Esophagus muscularis mucosa (tissue), 4 donors: ENCODE measurements at regions of chr20 and their contacts with region 1.

Region 1: GRCh38 chr20:33299111-33299603 is 16.1 kb downstream of the BPIFB1 start:
- DNase-seq: no peak
- H3K4me3 ChIP-seq: no peak overlapping the region
- H3K27ac ChIP-seq: no peak overlapping the region
- H3K4me1 ChIP-seq: peaks cover 0 to 6% (median 5%) of the 10 kb centered on the region in 4 donors
- H3K27me3 ChIP-seq: peaks cover 0 to 26% (median 0%) of the 10 kb centered on the region in 4 donors
- CTCF ChIP-seq: peak; percentile 71 to 93 (median 87)
- EP300 ChIP-seq: no peak
- POLR2A ChIP-seq: no peak

Region 2: DNA sequence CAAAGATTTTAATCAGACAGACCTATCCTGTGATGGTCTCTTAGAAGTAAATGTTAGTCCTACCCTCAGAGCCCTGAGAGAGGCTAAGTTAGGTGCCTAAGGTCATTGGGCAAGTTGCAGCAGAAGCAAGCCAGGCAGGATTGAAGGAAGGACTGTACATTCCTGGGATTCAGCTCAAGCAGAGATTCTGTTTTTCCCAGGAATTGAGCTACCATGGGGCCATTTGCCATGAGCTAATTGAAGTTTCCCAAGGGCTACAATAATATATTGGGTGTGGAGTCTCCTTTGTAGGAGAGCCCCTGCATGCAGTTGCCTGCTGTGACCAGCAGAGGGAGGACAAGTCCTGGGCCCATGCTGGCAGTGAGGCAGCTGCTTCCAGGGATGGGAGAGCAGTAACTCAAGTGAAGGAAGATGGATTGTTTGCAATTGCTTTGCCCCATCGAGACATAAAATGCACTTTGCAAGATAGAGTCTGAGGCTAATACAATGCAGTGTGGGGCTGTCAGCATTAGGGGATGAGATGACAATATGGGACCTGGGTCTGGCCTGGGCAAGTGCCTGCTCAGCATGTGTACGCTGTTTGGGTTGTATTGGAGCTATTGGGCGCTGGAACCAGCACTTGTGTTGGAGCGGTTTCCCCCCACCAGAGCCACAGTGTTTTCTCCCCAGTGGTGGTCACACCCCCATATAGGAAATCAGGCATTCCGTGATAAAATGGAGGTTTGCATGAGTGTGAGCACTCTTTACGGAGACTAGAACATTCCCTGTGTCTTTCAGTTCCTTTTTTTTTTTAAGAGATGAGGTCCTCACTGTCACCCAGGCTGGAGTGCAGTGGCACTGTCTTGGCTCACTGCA is 509.0 kb before region 1 on chr20:
- intact Hi-C with region 1: loop called (anchors 5 kb)
- DNase-seq: no peak
- H3K4me3 ChIP-seq: no peak overlapping the region
- H3K27ac ChIP-seq: no peak overlapping the region
- H3K4me1 ChIP-seq: peaks cover 0 to 11% (median 3%) of the 10 kb centered on the region in 4 donors
- H3K27me3 ChIP-seq: no peaks in the 10 kb centered on the region
- CTCF ChIP-seq: peak in 2 of 3 experiments; percentile 97 to 99
- EP300 ChIP-seq: no peak
- POLR2A ChIP-seq: no peak

Region 3: DNA sequence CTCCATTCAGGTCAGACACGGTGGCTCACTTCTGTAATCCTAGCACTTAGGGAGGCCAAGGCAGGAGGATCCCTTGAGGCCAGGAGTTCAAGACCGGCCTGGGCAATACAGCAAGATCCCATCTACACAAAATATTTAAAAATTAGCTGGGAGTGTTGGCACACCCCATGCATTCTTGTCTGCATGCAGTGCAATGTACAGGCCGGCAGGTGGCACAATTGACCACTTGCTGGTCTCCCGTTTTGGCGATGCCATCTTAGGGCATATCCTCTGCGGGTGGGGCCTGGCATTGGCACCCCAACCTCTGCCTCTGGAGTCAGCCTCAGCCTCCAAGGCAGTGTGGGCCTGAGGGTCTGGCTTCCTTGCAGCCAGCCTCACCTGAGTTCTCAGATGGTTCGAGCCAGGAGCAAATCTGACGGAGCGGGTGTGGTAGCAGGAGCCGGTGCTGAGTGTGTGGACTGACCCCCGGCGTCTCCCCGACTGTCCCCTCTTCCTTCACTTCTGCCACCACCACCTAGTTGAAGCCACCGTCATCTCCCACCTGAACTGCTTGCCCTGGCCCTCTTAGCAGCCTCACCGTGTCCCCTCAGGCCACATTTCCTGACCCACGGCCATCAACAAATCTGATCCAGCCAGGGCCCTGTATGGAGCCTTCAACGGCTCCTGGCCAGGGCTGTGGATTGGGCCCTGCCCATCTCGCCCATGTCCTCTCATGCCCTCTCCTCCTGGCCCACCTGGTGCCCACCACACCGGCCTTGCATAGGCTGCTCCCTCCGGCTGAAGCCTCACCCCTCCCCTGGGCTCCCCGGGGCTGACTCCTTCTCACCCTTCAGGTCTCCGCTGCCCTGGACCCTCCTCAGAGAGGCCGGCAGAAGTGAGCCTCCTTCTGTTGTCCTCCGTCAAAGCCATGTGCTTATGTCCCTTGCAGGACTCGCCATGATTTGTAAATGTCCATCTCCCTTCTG is 396.4 kb before region 1 on chr20:
- intact Hi-C with region 1: loop called (anchors 2 kb)
- DNase-seq: no peak
- H3K4me3 ChIP-seq: no peak overlapping the region
- H3K27ac ChIP-seq: no peak overlapping the region
- H3K4me1 ChIP-seq: peaks cover 0 to 4% (median 1%) of the 10 kb centered on the region in 4 donors
- H3K27me3 ChIP-seq: no peaks in the 10 kb centered on the region
- CTCF ChIP-seq: peak; percentile 83 to 94 (median 86)
- EP300 ChIP-seq: no peak
- POLR2A ChIP-seq: no peak